ENCODE measurements at regions of chr3 and their contacts with region 1.

Region 1: GRCh38 chr3:114290911-114291901 is 2.6 kb upstream of the TIGIT start:
- DNase-seq: peak; percentile 94
- H3K4me3 Mint-ChIP-seq: peak overlapping the region; percentile 50
- H3K27ac Mint-ChIP-seq: peak overlapping the region; percentile 83
- H3K4me1 Mint-ChIP-seq: peaks cover 15% of the 10 kb centered on the region
- H3K27me3 Mint-ChIP-seq: no peaks in the 10 kb centered on the region

Region 2: GRCh38 chr3:114242947-114243346 is 48.3 kb before region 1 on chr3:
- intact Hi-C with region 1: loop called (anchors 5 kb)
- DNase-seq: peak; percentile 80
- H3K4me3 Mint-ChIP-seq: no peak overlapping the region
- H3K27ac Mint-ChIP-seq: no peak overlapping the region
- H3K4me1 Mint-ChIP-seq: peaks cover 21% of the 10 kb centered on the region
- H3K27me3 Mint-ChIP-seq: no peaks in the 10 kb centered on the region

Region 3: GRCh38 chr3:114308830-114309229 is 17.6 kb after region 1 on chr3:
- intact Hi-C with region 1: loop called (anchors 2 kb)
- DNase-seq: peak; percentile 79
- H3K4me3 Mint-ChIP-seq: peak overlapping the region; percentile 49
- H3K27ac Mint-ChIP-seq: peak overlapping the region; percentile 92
- H3K4me1 Mint-ChIP-seq: peaks cover 33% of the 10 kb centered on the region
- H3K27me3 Mint-ChIP-seq: no peaks in the 10 kb centered on the region

Region 4: GRCh38 chr3:114332342-114333179 is 41.4 kb after region 1 on chr3:
- intact Hi-C with region 1: loop called (anchors 2 kb)
- DNase-seq: no peak
- H3K4me3 Mint-ChIP-seq: no peak overlapping the region
- H3K27ac Mint-ChIP-seq: peak overlapping the region; percentile 89
- H3K4me1 Mint-ChIP-seq: peaks cover 42% of the 10 kb centered on the region
- H3K27me3 Mint-ChIP-seq: no peaks in the 10 kb centered on the region

Region 5: DNA sequence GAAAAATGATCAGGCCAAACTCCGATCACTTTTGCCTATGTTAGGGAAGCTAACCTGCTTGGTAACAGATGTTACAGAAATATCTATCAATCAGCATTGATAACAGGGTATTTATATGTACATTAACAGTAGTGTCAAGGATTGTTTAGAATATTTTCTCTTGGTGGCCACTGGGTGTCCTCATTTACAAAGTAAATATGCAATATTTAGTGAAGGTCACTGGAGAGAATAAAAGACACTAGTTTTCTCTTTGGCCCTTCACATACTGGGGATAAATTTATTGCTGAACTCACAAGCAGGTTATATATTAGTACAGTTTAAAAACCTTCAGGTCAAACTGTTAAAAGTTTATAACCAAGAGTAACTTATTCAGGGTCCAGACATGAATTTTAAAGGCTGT is 71.6 kb after region 1 on chr3:
- intact Hi-C with region 1: loop called (anchors 1 kb)
- DNase-seq: no peak
- H3K4me3 Mint-ChIP-seq: no peak overlapping the region
- H3K27ac Mint-ChIP-seq: no peak overlapping the region
- H3K4me1 Mint-ChIP-seq: peaks cover 2% of the 10 kb centered on the region
- H3K27me3 Mint-ChIP-seq: no peaks in the 10 kb centered on the region